Left ventricle myocardium superior (tissue), 1 donor: ENCODE measurements at regions of chr4 and their contacts with region 1.

Region 1: GRCh38 chr4:8403173-8403753 is 37.3 kb downstream of the ACOX3 start:
- DNase-seq: peak; percentile 94
- ATAC-seq: peak; percentile 81

Region 2: GRCh38 chr4:8176547-8177399 is 226.5 kb before region 1 on chr4:
- intact Hi-C with region 1: loop called (anchors 10 kb)
- DNase-seq: peak; percentile 72
- ATAC-seq: peak; percentile 78

Region 3: GRCh38 chr4:8241895-8242696 is 161.2 kb before region 1 on chr4:
- intact Hi-C with region 1: loop called (anchors 10 kb)
- DNase-seq: peak; percentile 92
- ATAC-seq: peak; percentile 86

Region 4: GRCh38 chr4:8274765-8275547 is 128.3 kb before region 1 on chr4:
- intact Hi-C with region 1: loop called (anchors 10 kb)
- DNase-seq: peak; percentile 94
- ATAC-seq: peak; percentile 76

Region 5: GRCh38 chr4:8320386-8320750 is 82.9 kb before region 1 on chr4:
- intact Hi-C with region 1: loop called (anchors 10 kb)
- DNase-seq: no peak
- ATAC-seq: peak; percentile 50